CD8-positive, alpha-beta T cell (primary cell): ENCODE measurements at regions of chr11 and their contacts with region 1.

Region 1: GRCh38 chr11:96342961-96343711 is at the start of gene MAML2:
- DNase-seq: peak; percentile 82 to 97 (median 89)
- ATAC-seq: peak; percentile 85
- H3K4me3 ChIP-seq: peak within 1 kb of the TSS; percentile 88 to 98
- H3K4me3 Mint-ChIP-seq: peak within 1 kb of the TSS; percentile 98
- H3K27ac ChIP-seq: peak within 1 kb of the TSS; percentile 66 to 83
- H3K27ac Mint-ChIP-seq: peak within 1 kb of the TSS; percentile 91
- H3K4me1 ChIP-seq: peaks cover 16% of the 10 kb centered on the region
- H3K4me1 Mint-ChIP-seq: peaks cover 39% of the 10 kb centered on the region
- H3K27me3 ChIP-seq: no peaks in the 10 kb centered on the region
- H3K27me3 Mint-ChIP-seq: no peaks in the 10 kb centered on the region
- CTCF ChIP-seq: peak; percentile 88
- total RNA-seq, gene MAML2: 41.2 to 42.3 TPM

Region 2: DNA sequence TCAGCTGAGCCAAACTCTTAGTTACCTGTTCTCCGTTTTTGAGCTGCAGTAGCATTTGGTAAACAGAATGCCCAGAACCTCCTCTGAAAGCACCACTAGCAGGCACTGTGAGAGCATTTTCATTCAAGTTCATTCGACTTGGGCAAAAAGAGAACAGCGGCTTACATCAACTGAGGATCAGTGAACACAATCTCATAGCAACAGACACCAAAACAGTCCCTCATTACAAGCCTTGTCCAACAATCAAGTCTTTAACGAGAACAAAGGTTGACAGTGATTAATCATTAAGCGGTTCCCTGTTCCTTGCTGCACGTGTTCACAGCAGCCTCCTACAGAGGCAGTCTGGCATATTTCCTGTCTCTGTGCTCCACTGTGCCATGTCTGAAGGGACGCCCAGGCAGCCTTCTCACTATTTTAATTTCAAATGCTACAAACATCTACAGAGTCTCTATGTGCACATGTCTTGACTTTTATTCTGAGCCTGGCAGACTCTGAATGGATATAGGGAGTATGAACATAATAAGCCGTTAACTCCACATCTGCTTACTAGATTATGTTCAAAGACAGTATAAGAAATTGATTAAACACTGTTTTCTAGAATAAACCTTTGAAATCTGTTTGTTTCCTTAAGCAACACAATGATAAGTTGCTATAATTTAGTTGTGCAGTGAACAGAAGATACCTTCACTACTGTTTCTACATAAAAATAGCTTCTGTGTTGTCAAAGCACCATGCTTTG is 330.9 kb before region 1 on chr11:
- CTCF ChIA-PET with region 1: interaction called, 57 read pairs
- POLR2A ChIA-PET with region 1: interaction called, 15 read pairs
- intact Hi-C with region 1: loop called (anchors 1 to 2 kb)
- DNase-seq: peak; percentile 25 to 84 (median 61)
- ATAC-seq: peak; percentile 73
- H3K4me3 ChIP-seq: no peak overlapping the region
- H3K4me3 Mint-ChIP-seq: peak overlapping the region; percentile 33
- H3K27ac ChIP-seq: peak overlapping the region; percentile 48 to 49
- H3K27ac Mint-ChIP-seq: peak overlapping the region; percentile 94
- H3K4me1 ChIP-seq: peaks cover 55% of the 10 kb centered on the region
- H3K4me1 Mint-ChIP-seq: peaks cover 17% of the 10 kb centered on the region
- H3K27me3 ChIP-seq: no peaks in the 10 kb centered on the region
- H3K27me3 Mint-ChIP-seq: no peaks in the 10 kb centered on the region
- CTCF ChIP-seq: peak; percentile 52

Region 3: GRCh38 chr11:96122601-96123074 is 220.5 kb before region 1 on chr11:
- CTCF ChIA-PET with region 1: interaction called, 16 read pairs
- POLR2A ChIA-PET with region 1: interaction called, 3 read pairs
- intact Hi-C with region 1: no loop called
- DNase-seq: no peak
- ATAC-seq: no peak
- H3K4me3 ChIP-seq: no peak overlapping the region
- H3K4me3 Mint-ChIP-seq: no peak overlapping the region
- H3K27ac ChIP-seq: no peak overlapping the region
- H3K27ac Mint-ChIP-seq: peak overlapping the region; percentile 24
- H3K4me1 ChIP-seq: peaks cover 39% of the 10 kb centered on the region
- H3K4me1 Mint-ChIP-seq: peaks cover 65% of the 10 kb centered on the region
- H3K27me3 ChIP-seq: no peaks in the 10 kb centered on the region
- H3K27me3 Mint-ChIP-seq: no peaks in the 10 kb centered on the region
- CTCF ChIP-seq: no peak

Region 4: GRCh38 chr11:96215110-96215782 is 127.9 kb before region 1 on chr11:
- CTCF ChIA-PET with region 1: interaction called, 41 read pairs
- POLR2A ChIA-PET with region 1: interaction called, 10 read pairs
- intact Hi-C with region 1: loop called in 1 of 2 experiments (anchors 2 kb)
- DNase-seq: peak in 7 of 9 experiments; percentile 15 to 76 (median 46)
- ATAC-seq: peak; percentile 63
- H3K4me3 ChIP-seq: peak overlapping the region in 1 of 2 experiments; percentile 31
- H3K4me3 Mint-ChIP-seq: peak overlapping the region; percentile 67
- H3K27ac ChIP-seq: peak overlapping the region; percentile 58 to 89
- H3K27ac Mint-ChIP-seq: peak overlapping the region; percentile 95
- H3K4me1 ChIP-seq: peaks cover 99% of the 10 kb centered on the region
- H3K4me1 Mint-ChIP-seq: peaks cover 82% of the 10 kb centered on the region
- H3K27me3 ChIP-seq: no peaks in the 10 kb centered on the region
- H3K27me3 Mint-ChIP-seq: no peaks in the 10 kb centered on the region
- CTCF ChIP-seq: no peak

Region 5: DNA sequence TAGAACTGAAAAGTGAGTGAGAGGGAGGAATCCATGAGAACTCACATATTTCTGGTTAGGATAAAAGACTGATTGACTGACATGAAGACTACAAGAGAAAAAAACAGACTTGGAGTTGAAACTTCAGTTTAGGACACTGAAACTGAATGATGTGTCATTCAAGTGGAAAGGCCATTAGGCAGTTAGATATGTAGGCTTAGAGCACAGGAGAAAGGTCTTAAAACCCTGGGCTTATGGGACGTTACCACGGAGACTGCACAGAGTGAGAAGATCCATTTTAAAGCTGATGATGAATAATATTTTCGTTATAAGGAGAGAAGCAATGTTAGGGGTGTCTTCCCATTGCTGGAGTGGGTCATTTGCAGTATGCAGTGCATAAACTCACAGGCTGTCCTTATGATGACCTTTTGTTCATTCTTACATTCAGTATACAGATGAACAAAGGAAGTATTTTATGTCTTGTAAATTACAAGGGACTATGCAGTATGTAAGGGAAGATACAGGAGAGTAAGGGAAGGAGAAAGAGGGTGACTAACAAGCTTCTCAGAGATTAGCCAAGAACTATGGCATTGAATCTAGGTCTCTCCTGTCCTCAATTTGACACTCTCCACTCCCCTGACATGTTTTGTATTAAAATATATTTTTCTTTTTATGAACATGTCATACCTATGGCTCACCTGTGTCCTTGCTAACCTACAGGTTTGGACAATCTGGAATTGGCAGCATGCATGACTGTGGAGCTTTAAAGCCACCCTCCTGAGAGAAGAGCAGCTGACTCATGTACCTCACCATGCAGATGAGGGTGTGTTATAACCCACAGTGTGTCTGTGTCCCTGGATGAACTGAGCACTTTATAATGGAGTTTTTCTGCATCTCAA is 63.9 kb before region 1 on chr11:
- CTCF ChIA-PET with region 1: interaction called, 16 read pairs
- POLR2A ChIA-PET with region 1: interaction called, 5 read pairs
- intact Hi-C with region 1: no loop called
- DNase-seq: no peak
- ATAC-seq: peak; percentile 51
- H3K4me3 ChIP-seq: no peak overlapping the region
- H3K4me3 Mint-ChIP-seq: no peak overlapping the region
- H3K27ac ChIP-seq: no peak overlapping the region
- H3K27ac Mint-ChIP-seq: peak overlapping the region; percentile 58
- H3K4me1 ChIP-seq: peaks cover 49% of the 10 kb centered on the region
- H3K4me1 Mint-ChIP-seq: peaks cover 74% of the 10 kb centered on the region
- H3K27me3 ChIP-seq: no peaks in the 10 kb centered on the region
- H3K27me3 Mint-ChIP-seq: no peaks in the 10 kb centered on the region
- CTCF ChIP-seq: no peak

Region 6: DNA sequence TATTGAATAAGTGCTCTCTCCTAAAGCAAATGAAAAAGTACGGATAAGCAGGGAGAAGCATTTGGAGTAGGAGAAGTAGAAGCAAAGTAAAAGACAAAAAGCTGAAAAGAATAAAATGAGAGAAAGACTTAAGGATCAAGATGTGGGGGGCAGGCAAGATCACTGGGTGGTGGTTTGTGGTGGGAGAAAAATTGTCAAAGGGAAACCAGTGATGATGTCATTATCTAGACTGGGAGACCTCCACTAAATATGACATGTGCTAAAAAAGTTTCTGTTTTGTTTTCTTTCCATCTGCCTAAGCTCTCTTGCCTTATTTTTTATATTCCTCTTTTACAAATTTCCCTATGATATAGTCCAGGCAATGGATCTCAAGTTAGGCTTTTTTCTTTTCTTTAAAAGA is 14.7 kb after region 1 on chr11:
- CTCF ChIA-PET with region 1: interaction called, 24 read pairs
- POLR2A ChIA-PET with region 1: no interaction called
- intact Hi-C with region 1: no loop called
- DNase-seq: peak in 4 of 9 experiments; percentile 9 to 63 (median 24)
- ATAC-seq: peak; percentile 90
- H3K4me3 ChIP-seq: no peak overlapping the region
- H3K4me3 Mint-ChIP-seq: no peak overlapping the region
- H3K27ac ChIP-seq: no peak overlapping the region
- H3K27ac Mint-ChIP-seq: peak overlapping the region; percentile 10
- H3K4me1 ChIP-seq: peaks cover 5% of the 10 kb centered on the region
- H3K4me1 Mint-ChIP-seq: peaks cover 17% of the 10 kb centered on the region
- H3K27me3 ChIP-seq: no peaks in the 10 kb centered on the region
- H3K27me3 Mint-ChIP-seq: no peaks in the 10 kb centered on the region
- CTCF ChIP-seq: no peak

Region 7: DNA sequence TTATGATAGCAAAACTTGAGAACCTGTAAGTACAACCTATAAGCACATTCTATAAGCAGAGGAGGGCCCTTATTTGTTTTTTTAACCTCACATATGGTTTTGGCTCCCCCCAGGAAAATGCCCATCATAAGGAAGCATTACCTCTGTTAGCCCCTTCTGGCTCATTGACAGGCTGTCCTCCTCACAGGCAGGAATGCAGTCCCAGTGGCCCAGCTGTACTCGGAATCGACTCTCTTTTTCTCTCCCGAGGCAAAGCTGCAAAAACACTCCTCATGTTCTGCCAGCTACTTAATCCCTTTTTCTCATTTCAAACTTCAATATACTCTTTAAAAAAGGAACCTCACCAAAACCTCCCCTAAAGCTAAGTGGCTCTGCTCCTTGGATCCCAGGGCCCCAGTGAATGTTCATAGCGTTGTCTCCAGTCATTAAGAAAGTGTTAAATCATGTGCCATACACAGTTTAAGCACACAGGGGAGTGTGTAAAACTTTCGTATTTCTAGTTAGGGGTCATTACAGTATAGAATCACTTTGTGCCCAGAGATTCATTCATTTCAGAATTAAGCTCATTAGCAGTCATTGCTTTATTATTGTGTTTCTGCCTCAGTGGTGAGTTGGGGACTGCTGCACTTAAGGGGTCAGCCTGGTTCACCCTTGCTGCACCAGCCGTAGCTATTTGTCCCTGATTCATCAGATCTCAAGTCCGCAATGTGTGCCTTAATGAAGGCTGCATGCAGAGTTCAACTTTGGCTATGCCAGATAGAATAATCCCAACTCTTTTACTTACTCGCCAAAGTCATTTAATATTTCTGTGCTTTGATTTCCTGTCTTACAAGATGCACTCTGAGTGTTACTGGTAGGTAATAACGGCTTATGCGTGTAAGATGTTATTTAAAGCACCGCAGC is 104.3 kb after region 1 on chr11:
- CTCF ChIA-PET with region 1: no interaction called
- POLR2A ChIA-PET with region 1: no interaction called
- intact Hi-C with region 1: no loop called
- DNase-seq: no peak
- ATAC-seq: no peak
- H3K4me3 ChIP-seq: no peak overlapping the region
- H3K4me3 Mint-ChIP-seq: no peak overlapping the region
- H3K27ac ChIP-seq: no peak overlapping the region
- H3K27ac Mint-ChIP-seq: no peak overlapping the region
- H3K4me1 ChIP-seq: no peaks in the 10 kb centered on the region
- H3K4me1 Mint-ChIP-seq: no peaks in the 10 kb centered on the region
- H3K27me3 ChIP-seq: peaks cover 0 to 2% of the 10 kb centered on the region in 2 experiments
- H3K27me3 Mint-ChIP-seq: peaks cover 8% of the 10 kb centered on the region
- CTCF ChIP-seq: no peak

Region 8: GRCh38 chr11:96554236-96554820 is 211.2 kb after region 1 on chr11:
- CTCF ChIA-PET with region 1: no interaction called
- POLR2A ChIA-PET with region 1: no interaction called
- intact Hi-C with region 1: no loop called
- DNase-seq: no peak
- ATAC-seq: no peak
- H3K4me3 ChIP-seq: no peak overlapping the region
- H3K4me3 Mint-ChIP-seq: no peak overlapping the region
- H3K27ac ChIP-seq: no peak overlapping the region
- H3K27ac Mint-ChIP-seq: no peak overlapping the region
- H3K4me1 ChIP-seq: no peaks in the 10 kb centered on the region
- H3K4me1 Mint-ChIP-seq: no peaks in the 10 kb centered on the region
- H3K27me3 ChIP-seq: no peaks in the 10 kb centered on the region
- H3K27me3 Mint-ChIP-seq: no peaks in the 10 kb centered on the region
- CTCF ChIP-seq: no peak

Region 9: GRCh38 chr11:96875712-96876111 is 532.6 kb after region 1 on chr11:
- CTCF ChIA-PET with region 1: no interaction called
- POLR2A ChIA-PET with region 1: no interaction called
- intact Hi-C with region 1: no loop called
- DNase-seq: no peak
- ATAC-seq: no peak
- H3K4me3 ChIP-seq: no peak overlapping the region
- H3K4me3 Mint-ChIP-seq: no peak overlapping the region
- H3K27ac ChIP-seq: no peak overlapping the region
- H3K27ac Mint-ChIP-seq: no peak overlapping the region
- H3K4me1 ChIP-seq: no peaks in the 10 kb centered on the region
- H3K4me1 Mint-ChIP-seq: no peaks in the 10 kb centered on the region
- H3K27me3 ChIP-seq: no peaks in the 10 kb centered on the region
- H3K27me3 Mint-ChIP-seq: no peaks in the 10 kb centered on the region
- CTCF ChIP-seq: no peak